WTC11 (cell line): ENCODE measurements at regions of chr18 and their contacts with region 1.

Region 1: DNA sequence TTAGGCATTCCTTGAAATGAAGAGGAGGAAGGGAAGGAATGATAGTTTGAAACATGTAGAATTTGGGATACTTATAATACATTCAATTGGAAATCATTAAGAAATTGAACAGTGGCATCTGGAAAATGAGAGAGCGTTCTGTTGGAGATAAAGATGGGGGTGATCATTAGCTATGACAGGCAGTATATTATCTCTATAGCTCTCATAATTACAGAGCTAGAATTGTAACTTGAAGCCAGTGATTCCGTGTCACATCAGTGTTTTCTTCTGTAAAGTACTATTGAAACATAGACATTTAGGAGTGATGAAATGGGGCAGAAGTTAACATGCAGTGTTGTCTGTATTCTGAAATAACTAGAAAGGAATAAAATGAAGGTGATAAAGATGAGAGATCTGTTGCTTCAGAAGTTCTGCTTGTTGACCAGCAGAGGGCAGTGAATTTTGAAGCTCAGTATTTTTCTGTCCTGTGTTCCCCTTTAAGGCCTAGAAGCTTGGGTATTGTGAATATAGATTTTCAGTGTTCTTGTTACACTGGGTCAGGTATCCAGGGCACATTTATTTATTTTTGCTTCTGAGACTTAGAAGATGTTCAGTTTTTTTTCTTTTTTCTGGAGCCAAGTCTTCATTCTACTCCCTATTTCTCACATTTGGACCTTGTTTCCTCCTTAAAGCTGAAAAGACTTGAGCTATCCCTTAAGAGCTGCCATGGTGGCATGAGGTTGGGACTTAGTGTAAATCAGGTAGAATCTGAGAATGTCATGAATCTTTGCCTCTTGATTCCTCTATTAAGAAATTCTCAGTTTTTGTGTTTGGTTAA is 157.4 kb downstream of the TAF4B start:
- DNase-seq: no peak
- ATAC-seq: peak; percentile 83
- H3K4me3 Mint-ChIP-seq: no peak overlapping the region
- H3K27ac Mint-ChIP-seq: no peak overlapping the region
- H3K4me1 Mint-ChIP-seq: peaks cover 13% of the 10 kb centered on the region
- H3K27me3 Mint-ChIP-seq: no peaks in the 10 kb centered on the region
- CTCF ChIP-seq: no peak

Region 2: GRCh38 chr18:26370037-26370436 is 13.6 kb before region 1 on chr18:
- CTCF ChIA-PET with region 1: interaction called, 27 read pairs
- POLR2A ChIA-PET with region 1: no interaction called
- DNase-seq: no peak
- ATAC-seq: no peak
- H3K4me3 Mint-ChIP-seq: no peak overlapping the region
- H3K27ac Mint-ChIP-seq: no peak overlapping the region
- H3K4me1 Mint-ChIP-seq: peaks cover 19% of the 10 kb centered on the region
- H3K27me3 Mint-ChIP-seq: no peaks in the 10 kb centered on the region; the same call in 1 of the 2 replicates
- CTCF ChIP-seq: no peak

Region 3: GRCh38 chr18:26440644-26441043 is 57.0 kb after region 1 on chr18:
- CTCF ChIA-PET with region 1: interaction called, 14 read pairs
- POLR2A ChIA-PET with region 1: no interaction called
- DNase-seq: no peak
- ATAC-seq: no peak
- H3K4me3 Mint-ChIP-seq: no peak overlapping the region
- H3K27ac Mint-ChIP-seq: no peak overlapping the region
- H3K4me1 Mint-ChIP-seq: peaks cover 13% of the 10 kb centered on the region
- H3K27me3 Mint-ChIP-seq: no peaks in the 10 kb centered on the region; the same call in 1 of the 2 replicates
- CTCF ChIP-seq: no peak

Region 4: DNA sequence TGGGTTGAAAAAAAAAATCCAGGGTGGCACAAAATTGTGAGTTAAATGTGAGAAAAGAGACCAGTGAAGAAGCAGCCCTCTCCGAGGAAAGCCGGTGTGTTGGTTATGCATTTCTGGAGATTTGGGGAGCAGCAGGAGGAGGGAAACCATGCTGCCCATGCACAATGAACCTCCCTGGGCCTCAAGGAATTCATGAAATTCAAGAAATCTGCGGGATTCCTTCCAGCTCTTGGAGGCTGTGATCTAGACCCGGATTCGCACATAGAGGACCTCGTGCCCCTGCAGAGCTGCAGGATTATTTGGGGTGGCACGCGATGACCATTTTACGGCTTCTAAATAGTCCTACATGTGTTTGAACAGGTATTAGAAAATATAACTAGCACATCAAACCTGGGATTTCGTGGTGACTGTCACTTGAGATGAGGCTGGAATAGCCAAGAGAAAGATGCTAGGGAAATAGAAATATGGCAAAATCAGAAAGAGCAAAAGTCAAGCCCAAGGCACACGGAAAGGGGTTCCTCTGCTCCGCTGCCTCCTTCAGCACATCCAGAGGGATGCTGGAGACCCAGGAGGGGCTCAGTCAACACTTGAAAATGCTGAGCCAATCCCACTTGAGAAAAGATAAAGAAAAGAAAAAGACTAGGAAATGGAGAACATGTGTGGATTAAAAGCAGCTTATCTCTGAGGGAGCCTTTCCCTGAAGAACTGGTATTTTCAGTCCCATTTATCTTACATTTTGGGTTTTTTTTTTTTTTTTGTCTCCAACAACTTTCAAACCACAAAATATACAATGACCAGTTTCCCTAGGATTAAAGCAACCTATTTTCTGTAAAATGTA is 142.7 kb after region 1 on chr18:
- CTCF ChIA-PET with region 1: interaction called, 13 read pairs
- POLR2A ChIA-PET with region 1: no interaction called
- DNase-seq: peak; percentile 42
- ATAC-seq: peak; percentile 79
- H3K4me3 Mint-ChIP-seq: peak overlapping the region; percentile 53
- H3K27ac Mint-ChIP-seq: peak overlapping the region; percentile 91
- H3K4me1 Mint-ChIP-seq: peaks cover 63% of the 10 kb centered on the region
- H3K27me3 Mint-ChIP-seq: no peaks in the 10 kb centered on the region
- CTCF ChIP-seq: no peak